ENCODE measurements at regions of chr5 and their contacts with region 1.

Region 1: GRCh38 chr5:57825031-57825683 is 342.5 kb upstream of the ACTBL2 start:
- DNase-seq: peak; percentile 89
- H3K4me3 ChIP-seq: no peak overlapping the region
- H3K27ac ChIP-seq: peak overlapping the region; percentile 99
- H3K4me1 ChIP-seq: peaks cover 36% of the 10 kb centered on the region
- H3K27me3 ChIP-seq: no peaks in the 10 kb centered on the region
- CTCF ChIP-seq: no peak

Region 2: DNA sequence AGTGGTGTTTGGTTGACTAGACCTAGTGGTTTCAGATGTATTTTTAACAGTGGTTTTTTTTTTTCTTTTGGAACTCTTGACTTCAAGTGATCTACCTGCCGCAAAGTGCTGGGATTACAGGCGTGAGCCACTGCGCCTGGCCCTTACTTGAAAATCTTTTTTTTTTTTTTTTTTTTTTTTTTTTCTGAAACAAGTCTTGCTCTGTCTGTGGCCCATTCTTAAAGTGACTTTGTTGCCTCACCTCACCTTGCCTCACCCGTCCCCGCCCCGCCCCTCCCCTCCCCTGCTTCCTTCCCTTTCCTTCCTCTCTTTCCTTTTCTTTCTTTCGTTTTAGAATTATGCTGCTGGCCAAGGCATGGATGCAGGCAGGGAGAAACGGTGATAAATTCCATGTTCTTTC is 625.3 kb before region 1 on chr5:
- CTCF ChIA-PET with region 1: no interaction called
- dilution Hi-C with region 1: no loop called
- in situ Hi-C with region 1: no loop called
- intact Hi-C with region 1: no loop called
- DNase-seq: no peak
- H3K4me3 ChIP-seq: no peak overlapping the region
- H3K27ac ChIP-seq: no peak overlapping the region
- H3K4me1 ChIP-seq: peaks cover 7% of the 10 kb centered on the region
- H3K27me3 ChIP-seq: no peaks in the 10 kb centered on the region
- CTCF ChIP-seq: no peak

Region 3: GRCh38 chr5:57855831-57856230 is 30.7 kb after region 1 on chr5:
- CTCF ChIA-PET with region 1: no interaction called
- dilution Hi-C with region 1: no loop called
- in situ Hi-C with region 1: no loop called
- intact Hi-C with region 1: loop called (anchors 2 kb)
- DNase-seq: peak; percentile 71
- H3K4me3 ChIP-seq: no peak overlapping the region
- H3K27ac ChIP-seq: peak overlapping the region; percentile 30
- H3K4me1 ChIP-seq: peaks cover 23% of the 10 kb centered on the region
- H3K27me3 ChIP-seq: no peaks in the 10 kb centered on the region
- CTCF ChIP-seq: no peak

Region 4: GRCh38 chr5:57878301-57878722 is 53.2 kb after region 1 on chr5:
- CTCF ChIA-PET with region 1: no interaction called
- dilution Hi-C with region 1: loop called (anchors 5 kb)
- in situ Hi-C with region 1: no loop called
- intact Hi-C with region 1: no loop called
- DNase-seq: no peak
- H3K4me3 ChIP-seq: no peak overlapping the region
- H3K27ac ChIP-seq: no peak overlapping the region
- H3K4me1 ChIP-seq: no peaks in the 10 kb centered on the region
- H3K27me3 ChIP-seq: no peaks in the 10 kb centered on the region
- CTCF ChIP-seq: no peak

Measured in mammary epithelial cell (primary cell).